ENCODE measurements at regions of chr5 and their contacts with region 1.

Region 1: DNA sequence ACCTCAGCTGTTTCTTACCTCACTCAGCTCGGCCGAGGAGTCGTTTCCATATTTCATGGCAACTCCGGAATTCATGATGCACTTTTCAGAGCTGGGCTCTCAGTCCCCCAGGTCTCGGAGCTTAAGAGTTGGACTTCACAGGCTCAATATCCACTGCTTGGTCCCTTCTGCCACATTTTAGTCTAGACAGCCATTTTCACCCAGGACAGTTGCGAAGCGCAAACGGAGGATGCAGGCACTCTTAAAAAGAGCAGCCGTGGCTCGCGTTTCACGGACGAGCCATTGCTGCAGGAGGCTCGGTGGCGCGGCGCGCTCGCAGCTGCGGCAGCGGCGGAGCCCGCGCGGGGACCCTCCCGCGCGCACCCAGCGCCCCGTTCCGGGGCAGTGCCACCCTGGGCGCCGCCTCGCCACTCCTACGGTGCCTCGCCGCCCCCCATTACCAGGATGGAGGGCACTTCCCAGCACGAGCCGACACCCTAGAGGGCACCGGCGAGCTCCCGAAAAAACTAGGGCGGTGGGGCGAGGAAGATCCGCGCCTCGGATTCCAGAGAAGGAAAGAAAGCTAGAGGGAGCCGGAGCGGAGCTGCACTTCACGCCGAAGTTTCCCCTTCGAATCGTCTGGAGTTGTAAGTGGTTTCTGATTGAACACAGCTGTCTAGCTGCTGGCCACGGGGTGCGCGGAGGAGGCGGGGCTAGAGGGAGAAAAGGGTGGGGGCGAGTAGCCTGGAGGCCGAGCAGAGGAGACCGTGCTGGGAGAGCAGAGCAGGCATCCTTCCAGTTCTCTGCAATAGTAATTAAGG is 140.3 kb downstream of the TSSK1B start:
- DNase-seq: peak; percentile 86 to 92
- ATAC-seq: peak; percentile 90 to 96 (median 95)
- H3K4me3 ChIP-seq: peak overlapping the region; percentile 91
- H3K27ac ChIP-seq: peak overlapping the region; percentile 84
- H3K4me1 ChIP-seq: peaks cover 7% of the 10 kb centered on the region
- H3K27me3 ChIP-seq: peaks cover 0 to 9% (median 0%) of the 10 kb centered on the region in 3 donors
- CTCF ChIP-seq: no peak

Region 2: GRCh38 chr5:113075019-113075418 is 219.5 kb before region 1 on chr5:
- intact Hi-C with region 1: loop called in 1 of 2 experiments (anchors 5 kb)
- DNase-seq: no peak
- ATAC-seq: no peak
- H3K4me3 ChIP-seq: no peak overlapping the region
- H3K27ac ChIP-seq: no peak overlapping the region
- H3K4me1 ChIP-seq: no peaks in the 10 kb centered on the region
- H3K27me3 ChIP-seq: no peaks in the 10 kb centered on the region
- CTCF ChIP-seq: no peak

Region 3: DNA sequence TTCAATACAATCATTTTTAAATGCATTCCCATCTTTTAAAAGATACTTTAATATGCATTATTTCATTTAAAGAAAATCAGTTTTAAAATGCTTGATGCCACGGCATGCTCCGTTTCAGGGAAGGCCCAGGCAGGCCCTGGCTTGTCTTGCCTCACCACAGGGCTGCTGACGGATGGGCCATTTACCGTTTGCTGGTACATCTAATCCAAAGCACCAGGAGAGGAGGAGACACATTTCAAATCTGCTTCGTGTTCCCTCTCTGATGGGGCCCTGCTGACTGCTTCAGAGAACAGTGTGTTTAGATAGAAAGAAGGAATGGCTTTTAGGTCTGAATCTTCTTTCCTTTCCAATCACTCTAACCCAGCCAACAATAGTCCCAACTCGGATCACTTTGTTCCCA is 132.7 kb before region 1 on chr5:
- intact Hi-C with region 1: no loop called
- DNase-seq: no peak
- ATAC-seq: peak in 3 of 4 donors; percentile 38 to 55 (median 47)
- H3K4me3 ChIP-seq: no peak overlapping the region
- H3K27ac ChIP-seq: no peak overlapping the region
- H3K4me1 ChIP-seq: peaks cover 4% of the 10 kb centered on the region
- H3K27me3 ChIP-seq: peaks cover 0 to 2% (median 0%) of the 10 kb centered on the region in 3 donors
- CTCF ChIP-seq: no peak

Region 4: DNA sequence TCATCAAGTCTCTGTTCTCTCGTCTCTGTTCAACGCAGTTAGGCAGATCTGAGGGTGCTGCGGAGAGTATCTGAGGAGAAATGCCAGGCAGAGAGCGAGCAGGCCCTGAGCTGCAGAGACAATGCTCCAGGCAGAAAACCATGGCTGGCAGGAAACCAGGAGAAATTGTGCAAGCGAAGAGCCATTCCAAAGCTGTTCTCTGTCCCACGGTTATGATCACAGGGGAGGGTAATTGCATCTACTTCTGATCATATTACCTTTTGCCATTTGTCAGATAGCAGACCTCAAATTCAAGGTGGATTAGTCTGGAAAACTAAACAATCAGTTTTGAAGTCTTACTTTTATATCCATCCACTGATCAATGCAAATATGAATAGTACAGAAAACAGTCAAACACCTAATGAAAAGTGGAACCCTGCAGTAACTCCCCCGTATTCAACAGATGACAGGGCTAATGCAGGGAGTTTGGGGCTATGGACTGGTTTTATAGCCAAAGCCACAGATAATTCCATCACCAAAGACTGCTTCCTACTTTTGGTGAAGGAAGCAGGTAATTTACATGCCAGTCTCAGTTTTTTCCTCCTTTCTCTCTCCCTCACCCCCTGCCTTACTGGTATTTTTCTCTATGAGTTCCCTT is 89.9 kb before region 1 on chr5:
- intact Hi-C with region 1: loop called in 1 of 2 experiments (anchors 5 kb)
- DNase-seq: peak; percentile 66 to 79
- ATAC-seq: peak; percentile 72 to 84 (median 82)
- H3K4me3 ChIP-seq: peak overlapping the region; percentile 24
- H3K27ac ChIP-seq: no peak overlapping the region
- H3K4me1 ChIP-seq: peaks cover 17% of the 10 kb centered on the region
- H3K27me3 ChIP-seq: no peaks in the 10 kb centered on the region
- CTCF ChIP-seq: no peak

Region 5: DNA sequence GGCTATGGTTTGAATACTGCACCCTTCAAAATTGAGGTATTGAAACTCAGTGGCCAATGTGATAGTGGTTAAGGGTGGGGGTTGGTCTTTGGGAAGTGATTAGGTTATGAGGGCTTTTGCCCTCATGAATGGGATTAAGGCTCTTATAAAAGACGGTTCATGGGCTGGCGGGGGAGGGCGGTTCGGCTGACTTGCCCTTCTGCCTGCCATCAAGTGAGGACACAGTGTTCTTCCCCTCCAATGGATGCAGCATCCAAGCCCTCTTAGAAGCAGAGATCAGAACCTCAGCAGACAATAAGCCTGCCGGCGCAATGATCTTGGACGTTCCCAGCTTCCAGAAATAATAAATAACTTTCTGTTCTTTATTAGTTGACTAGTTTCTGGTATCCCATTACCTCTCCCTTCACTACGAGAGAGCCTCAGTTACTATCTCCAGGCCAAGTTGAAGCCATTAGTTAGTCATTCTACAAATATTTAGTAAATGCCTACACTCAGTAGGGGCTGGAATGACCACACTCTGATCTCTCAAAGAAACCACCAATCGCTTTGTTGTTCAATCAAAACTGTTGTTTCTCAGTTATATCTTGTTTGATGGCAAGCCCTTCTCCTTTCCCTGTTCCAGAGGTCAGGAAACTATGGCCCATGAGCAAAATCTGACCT is 79.0 kb before region 1 on chr5:
- intact Hi-C with region 1: loop called in 1 of 2 experiments (anchors 5 kb)
- DNase-seq: no peak
- ATAC-seq: no peak
- H3K4me3 ChIP-seq: no peak overlapping the region
- H3K27ac ChIP-seq: no peak overlapping the region
- H3K4me1 ChIP-seq: peaks cover 15% of the 10 kb centered on the region
- H3K27me3 ChIP-seq: no peaks in the 10 kb centered on the region
- CTCF ChIP-seq: no peak

Region 6: GRCh38 chr5:113378959-113379541 is 84.5 kb after region 1 on chr5:
- intact Hi-C with region 1: no loop called
- DNase-seq: peak in 1 of 2 donors; percentile 25
- ATAC-seq: peak; percentile 42 to 75 (median 60)
- H3K4me3 ChIP-seq: no peak overlapping the region
- H3K27ac ChIP-seq: no peak overlapping the region
- H3K4me1 ChIP-seq: no peaks in the 10 kb centered on the region
- H3K27me3 ChIP-seq: no peaks in the 10 kb centered on the region
- CTCF ChIP-seq: peak; percentile 74

Region 7: GRCh38 chr5:113425914-113426313 is 131.4 kb after region 1 on chr5:
- intact Hi-C with region 1: no loop called
- DNase-seq: no peak
- ATAC-seq: no peak
- H3K4me3 ChIP-seq: no peak overlapping the region
- H3K27ac ChIP-seq: no peak overlapping the region
- H3K4me1 ChIP-seq: no peaks in the 10 kb centered on the region
- H3K27me3 ChIP-seq: no peaks in the 10 kb centered on the region
- CTCF ChIP-seq: no peak

Measured in psoas muscle (tissue), 8 donors.